Breast epithelium (tissue), 4 donors: ENCODE measurements at regions of chr7 and their contacts with region 1.

Region 1: DNA sequence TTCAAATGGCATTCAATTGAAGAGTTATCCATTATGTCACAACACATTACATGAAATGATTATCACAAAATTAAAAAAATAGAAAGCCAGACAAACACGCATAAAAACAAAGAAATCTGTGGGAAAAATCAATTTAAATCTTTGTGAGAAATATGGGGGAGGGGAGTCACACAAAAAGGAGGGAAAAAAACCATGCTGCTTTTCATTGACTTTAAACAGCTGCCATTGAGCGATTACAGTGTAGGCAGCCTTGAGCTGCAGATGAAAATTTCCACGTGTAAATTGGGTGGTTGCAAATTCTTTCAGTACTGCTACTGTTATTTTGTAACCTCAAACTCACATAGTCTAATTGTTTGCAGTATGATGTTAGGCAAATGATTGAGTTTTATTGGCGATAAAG is 889.9 kb upstream of the PHF14 start:
- DNase-seq: no peak
- H3K4me3 ChIP-seq: no peak overlapping the region
- H3K27ac ChIP-seq: no peak overlapping the region
- H3K4me1 ChIP-seq: no peaks in the 10 kb centered on the region
- H3K27me3 ChIP-seq: no peaks in the 10 kb centered on the region
- CTCF ChIP-seq: no peak
- POLR2A ChIP-seq: no peak

Region 2: GRCh38 chr7:8998762-8999161 is 1085.0 kb before region 1 on chr7:
- intact Hi-C with region 1: loop called (anchors 5 kb)
- DNase-seq: no peak
- H3K4me3 ChIP-seq: no peak overlapping the region
- H3K27ac ChIP-seq: no peak overlapping the region
- H3K4me1 ChIP-seq: no peaks in the 10 kb centered on the region
- H3K27me3 ChIP-seq: no peaks in the 10 kb centered on the region
- CTCF ChIP-seq: no peak
- POLR2A ChIP-seq: no peak

Region 3: DNA sequence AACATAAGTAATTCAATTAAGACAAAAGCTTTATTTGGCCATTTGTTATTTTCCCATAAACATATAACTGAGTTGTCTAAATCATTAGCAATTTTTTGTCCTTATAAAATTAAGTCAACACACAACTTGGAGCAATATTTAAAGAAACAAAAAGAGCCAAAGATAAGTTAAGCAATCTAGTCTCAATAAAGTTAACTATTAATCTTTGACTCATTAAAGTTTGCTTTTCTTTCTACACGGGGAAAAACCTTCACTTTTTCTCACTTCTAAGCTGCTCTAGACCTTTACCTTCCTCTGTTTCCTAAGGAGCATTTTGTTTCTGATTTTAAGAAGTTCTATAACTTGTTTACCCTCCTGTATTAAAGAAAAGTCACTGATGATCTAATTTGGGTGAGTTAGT is 22.8 kb after region 1 on chr7:
- intact Hi-C with region 1: no loop called
- DNase-seq: no peak
- H3K4me3 ChIP-seq: no peak overlapping the region
- H3K27ac ChIP-seq: no peak overlapping the region
- H3K4me1 ChIP-seq: no peaks in the 10 kb centered on the region
- H3K27me3 ChIP-seq: no peaks in the 10 kb centered on the region
- CTCF ChIP-seq: no peak
- POLR2A ChIP-seq: no peak

Region 4: DNA sequence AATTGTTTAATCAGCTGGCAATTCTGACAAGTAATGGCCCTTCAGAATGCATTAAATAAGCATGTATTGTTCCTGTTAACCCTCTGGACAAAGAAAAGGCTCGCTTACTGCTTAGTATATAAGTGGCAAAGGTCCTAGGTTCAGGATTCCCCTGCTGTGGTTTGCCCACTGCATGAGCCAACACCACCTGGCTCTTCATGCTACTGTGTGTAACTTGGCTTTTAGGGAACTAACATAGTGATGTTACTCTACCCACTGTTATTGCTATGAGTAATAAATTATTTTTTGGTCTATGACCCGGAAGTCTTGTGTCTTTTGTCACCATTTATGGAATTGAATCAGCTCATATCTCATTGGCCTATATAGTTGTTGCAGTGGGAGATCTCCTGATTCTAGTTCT is 98.2 kb after region 1 on chr7:
- intact Hi-C with region 1: no loop called
- DNase-seq: no peak
- H3K4me3 ChIP-seq: no peak overlapping the region
- H3K27ac ChIP-seq: no peak overlapping the region
- H3K4me1 ChIP-seq: no peaks in the 10 kb centered on the region
- H3K27me3 ChIP-seq: no peaks in the 10 kb centered on the region
- CTCF ChIP-seq: no peak
- POLR2A ChIP-seq: no peak